ENCODE measurements at regions of chr2 and their contacts with region 1.

Region 1: GRCh38 chr2:44087036-44087713 is 81.5 kb upstream of the PPM1B start:
- DNase-seq: peak; percentile 82 to 85
- ATAC-seq: peak; percentile 90 to 93
- H3K4me3 ChIP-seq: peak overlapping the region; percentile 42 to 46 (median 44)
- H3K27ac ChIP-seq: peak overlapping the region; percentile 82 to 90 (median 86)
- H3K4me1 ChIP-seq: peaks cover 24 to 34% of the 10 kb centered on the region in 2 donors
- H3K27me3 ChIP-seq: no peaks in the 10 kb centered on the region
- CTCF ChIP-seq: peak; percentile 92 to 99 (median 95)
- POLR2A ChIP-seq: peak; percentile 35 to 80

Region 2: DNA sequence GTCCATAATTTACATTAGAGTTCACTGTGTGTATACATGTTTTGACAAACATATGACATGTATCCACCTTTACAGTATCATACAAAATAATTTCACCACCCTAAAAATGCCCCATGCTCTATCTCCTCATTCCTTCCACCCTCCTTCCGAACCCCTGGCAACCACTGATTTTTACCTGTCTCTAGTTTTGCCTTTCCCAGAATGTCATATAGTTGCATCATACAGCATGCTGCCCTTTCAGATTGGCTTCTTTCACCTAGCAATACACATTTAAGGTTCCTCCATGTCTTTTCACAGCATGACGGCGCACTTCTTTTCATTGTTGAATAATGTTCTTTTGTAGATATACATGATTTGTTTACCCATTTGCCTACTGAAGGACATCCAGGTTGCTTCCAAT is 101.8 kb before region 1 on chr2:
- in situ Hi-C with region 1: no loop called
- intact Hi-C with region 1: no loop called
- DNase-seq: no peak
- ATAC-seq: no peak
- H3K4me3 ChIP-seq: no peak overlapping the region
- H3K27ac ChIP-seq: no peak overlapping the region
- H3K4me1 ChIP-seq: no peaks in the 10 kb centered on the region
- H3K27me3 ChIP-seq: no peaks in the 10 kb centered on the region
- CTCF ChIP-seq: no peak
- POLR2A ChIP-seq: no peak

Region 3: GRCh38 chr2:44167940-44168680 is 80.9 kb after region 1 on chr2:
- in situ Hi-C with region 1: loop called in 1 of 4 experiments (anchors 5 kb)
- intact Hi-C with region 1: loop called (anchors 2 kb)
- DNase-seq: peak; percentile 100
- ATAC-seq: peak; percentile 72 to 76
- H3K4me3 ChIP-seq: peak overlapping the region; percentile 54 to 65 (median 60)
- H3K27ac ChIP-seq: peak overlapping the region; percentile 89 to 96 (median 92)
- H3K4me1 ChIP-seq: peaks cover 19 to 27% of the 10 kb centered on the region in 2 donors
- H3K27me3 ChIP-seq: no peaks in the 10 kb centered on the region
- CTCF ChIP-seq: no peak
- POLR2A ChIP-seq: peak; percentile 76 to 81

Region 4: DNA sequence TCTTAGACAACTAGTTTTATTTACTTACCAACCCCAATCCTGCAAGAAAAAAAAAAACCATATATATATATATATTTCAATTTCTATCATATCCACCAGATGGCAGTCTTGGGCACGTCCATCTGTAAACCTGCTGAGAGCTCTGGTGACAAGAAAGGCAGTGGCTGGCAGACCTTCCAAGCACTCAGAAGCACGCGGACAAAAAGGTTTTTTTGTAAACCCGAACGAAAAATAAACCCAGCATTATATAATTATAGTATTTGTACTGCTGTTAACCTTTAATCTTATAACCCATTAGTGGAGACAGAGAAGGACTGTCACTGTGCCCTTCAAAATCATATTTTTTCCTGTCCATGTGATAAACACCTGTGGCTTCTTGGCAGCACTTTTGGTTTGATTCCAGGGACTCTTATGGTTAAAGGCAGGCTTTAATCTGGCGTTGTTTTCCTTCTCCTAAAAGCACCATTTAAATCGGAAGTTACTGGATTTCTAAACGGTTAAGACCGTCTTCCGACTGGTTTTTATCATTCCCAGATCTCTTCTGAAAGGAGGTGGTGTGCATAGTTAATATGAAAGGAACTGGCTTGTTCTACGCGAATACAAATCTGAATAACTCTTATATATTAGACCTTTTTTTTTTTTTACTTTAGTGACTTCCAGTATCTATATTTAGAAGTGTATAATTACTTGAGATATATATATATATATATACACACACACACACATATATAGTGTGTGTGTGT is 157.1 kb after region 1 on chr2:
- in situ Hi-C with region 1: no loop called
- intact Hi-C with region 1: loop called (anchors 2 kb)
- DNase-seq: peak; percentile 57 to 65
- ATAC-seq: peak; percentile 77 to 89
- H3K4me3 ChIP-seq: peak overlapping the region; percentile 16 to 48 (median 40)
- H3K27ac ChIP-seq: peak overlapping the region; percentile 36 to 83 (median 72)
- H3K4me1 ChIP-seq: peaks cover 12% of the 10 kb centered on the region in 2 donors
- H3K27me3 ChIP-seq: no peaks in the 10 kb centered on the region
- CTCF ChIP-seq: peak; percentile 43 to 76 (median 63)
- POLR2A ChIP-seq: no peak

Region 5: DNA sequence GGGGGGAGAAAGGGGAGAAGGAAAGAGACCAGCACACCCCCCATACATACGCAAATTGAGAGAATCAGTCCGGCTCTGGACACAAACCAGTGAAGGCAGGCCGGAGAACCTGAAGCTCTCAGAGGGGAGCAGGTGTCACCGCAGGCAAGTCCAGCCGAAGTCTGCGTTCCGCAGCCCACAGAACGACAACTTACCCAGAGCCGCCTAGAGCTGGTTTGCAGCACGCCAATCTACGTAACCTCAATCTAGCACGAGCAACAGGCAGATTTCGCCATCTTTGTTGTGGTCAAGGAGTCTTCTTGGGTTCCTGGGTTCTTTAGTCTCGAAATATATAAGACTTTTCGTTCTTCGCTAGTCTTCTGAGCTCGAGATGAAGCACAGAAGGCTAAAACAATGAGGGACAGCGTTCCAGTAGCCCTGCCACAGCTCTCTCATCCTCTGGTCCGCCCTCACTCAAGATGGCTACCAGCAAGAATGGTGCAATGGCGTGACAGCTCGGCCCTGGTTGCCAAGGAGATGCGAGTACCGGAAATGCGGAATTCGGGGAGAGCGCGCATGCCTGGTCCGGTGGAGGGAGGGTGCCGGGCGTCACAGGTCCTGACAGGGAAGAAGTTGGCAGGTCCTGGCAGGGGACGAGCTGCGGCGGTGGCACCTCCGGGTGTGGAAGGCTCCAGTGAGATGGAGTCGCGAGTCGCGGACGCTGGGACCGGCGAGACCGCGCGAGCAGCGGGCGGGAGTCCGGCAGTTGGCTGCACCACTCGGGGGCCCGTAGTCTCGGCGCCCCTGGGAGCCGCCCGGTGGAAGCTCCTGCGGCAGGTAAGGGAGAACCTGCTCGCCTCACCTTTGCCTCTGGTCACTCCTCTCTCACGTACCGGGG is 274.4 kb after region 1 on chr2 and contains the starts of genes CAMKMT and PREPL:
- in situ Hi-C with region 1: no loop called
- intact Hi-C with region 1: loop called (anchors 5 kb)
- DNase-seq: peak; percentile 98 to 99
- ATAC-seq: peak; percentile 94 to 95
- H3K4me3 ChIP-seq: peak within 1 kb of the TSS; percentile 64 to 96 (median 86)
- H3K27ac ChIP-seq: peak within 1 kb of the TSS; percentile 93 to 96 (median 94)
- H3K4me1 ChIP-seq: peaks cover 44 to 47% of the 10 kb centered on the region in 2 donors
- H3K27me3 ChIP-seq: no peaks in the 10 kb centered on the region
- CTCF ChIP-seq: no peak
- POLR2A ChIP-seq: peak; percentile 73 to 87
- total RNA-seq, gene CAMKMT: 2.6 to 9.5 (median 5.2) TPM
- total RNA-seq, gene PREPL: 27.3 to 60.0 (median 52.3) TPM

Measured in gastrocnemius medialis (tissue), 4 donors.